GM10248 (cell line): ENCODE measurements at regions of chr15 and their contacts with region 1.

Region 1: DNA sequence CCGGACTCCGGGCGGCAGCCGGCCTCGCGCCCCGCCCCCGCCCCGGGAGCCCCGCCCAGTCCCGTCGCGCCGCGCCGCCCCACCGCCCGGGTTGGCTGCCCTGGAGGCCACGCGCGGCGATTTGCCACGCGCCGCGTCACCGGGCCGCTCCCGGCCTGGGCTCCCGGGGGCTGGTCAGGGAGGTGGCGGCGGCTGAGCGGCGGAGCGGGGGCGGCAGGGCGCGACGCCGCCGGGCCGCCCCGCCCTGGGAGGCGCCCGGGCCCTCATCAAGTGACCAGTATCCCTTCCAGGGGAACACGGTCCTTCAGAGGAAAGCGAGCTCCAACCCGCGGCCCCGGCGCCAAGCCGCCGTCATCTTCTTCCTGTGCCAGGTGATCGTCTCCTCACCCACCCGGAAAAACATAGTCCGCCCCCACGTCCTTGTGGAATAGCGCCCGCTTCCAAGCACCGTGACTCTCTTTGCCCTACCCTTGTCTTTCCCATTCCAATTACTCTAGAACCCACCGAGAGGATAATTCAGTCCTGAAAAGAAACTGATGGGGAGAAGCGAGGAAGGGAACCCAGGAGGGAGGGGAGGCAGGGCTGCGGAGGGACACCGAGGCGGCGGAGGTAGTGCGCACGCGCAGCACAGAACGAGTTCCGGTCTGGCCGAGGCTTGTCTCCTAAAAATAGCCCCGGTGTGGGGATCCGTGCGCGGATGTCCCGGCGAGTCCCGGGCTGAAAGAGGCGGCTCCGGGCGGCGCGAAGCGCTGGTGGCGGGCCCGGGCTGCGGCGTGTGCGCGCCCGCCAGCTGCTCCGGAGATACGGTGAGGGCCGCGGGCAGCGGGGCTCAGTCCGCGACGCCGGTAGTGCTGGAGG is at the start of gene MEF2A:
- DNase-seq: peak; percentile 92
- CTCF ChIP-seq: no peak

Region 2: GRCh38 chr15:99104788-99105513 is 460.6 kb before region 1 on chr15 and contains the start of gene SYNM:
- CTCF ChIA-PET with region 1: no interaction called
- POLR2A ChIA-PET with region 1: no interaction called
- DNase-seq: peak; percentile 90
- CTCF ChIP-seq: peak; percentile 78

Region 3: DNA sequence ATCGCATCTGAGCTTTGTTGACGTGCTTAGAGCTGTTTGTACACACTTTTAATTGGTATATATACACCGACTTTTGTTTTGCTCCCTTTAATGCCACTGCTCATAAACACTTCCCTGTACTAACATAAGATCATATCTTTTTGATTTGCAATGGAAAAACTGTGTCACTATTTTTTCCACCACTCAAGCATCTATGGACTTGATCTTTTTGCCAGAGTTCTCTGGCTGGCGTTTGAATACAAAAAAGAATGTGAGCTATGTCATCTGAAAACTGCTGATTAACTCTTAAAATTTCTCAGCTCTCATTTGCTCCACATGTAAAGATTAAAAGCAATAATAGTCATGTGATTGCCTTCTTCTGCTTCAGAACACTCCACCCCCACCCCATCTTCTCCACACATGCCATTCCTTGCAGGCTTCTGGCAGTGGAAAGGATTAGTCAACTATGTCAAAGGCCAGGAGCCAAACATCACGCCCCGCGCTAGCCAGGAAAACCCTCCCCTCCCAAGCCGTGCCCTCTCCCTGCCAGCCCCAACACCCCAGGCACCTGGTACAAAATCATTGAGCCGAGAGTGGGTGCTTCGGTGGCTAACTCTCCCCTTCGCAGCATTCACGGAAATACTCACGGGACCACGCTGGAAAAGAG is 123.2 kb before region 1 on chr15:
- CTCF ChIA-PET with region 1: no interaction called
- POLR2A ChIA-PET with region 1: no interaction called
- DNase-seq: no peak
- CTCF ChIP-seq: no peak

Region 4: DNA sequence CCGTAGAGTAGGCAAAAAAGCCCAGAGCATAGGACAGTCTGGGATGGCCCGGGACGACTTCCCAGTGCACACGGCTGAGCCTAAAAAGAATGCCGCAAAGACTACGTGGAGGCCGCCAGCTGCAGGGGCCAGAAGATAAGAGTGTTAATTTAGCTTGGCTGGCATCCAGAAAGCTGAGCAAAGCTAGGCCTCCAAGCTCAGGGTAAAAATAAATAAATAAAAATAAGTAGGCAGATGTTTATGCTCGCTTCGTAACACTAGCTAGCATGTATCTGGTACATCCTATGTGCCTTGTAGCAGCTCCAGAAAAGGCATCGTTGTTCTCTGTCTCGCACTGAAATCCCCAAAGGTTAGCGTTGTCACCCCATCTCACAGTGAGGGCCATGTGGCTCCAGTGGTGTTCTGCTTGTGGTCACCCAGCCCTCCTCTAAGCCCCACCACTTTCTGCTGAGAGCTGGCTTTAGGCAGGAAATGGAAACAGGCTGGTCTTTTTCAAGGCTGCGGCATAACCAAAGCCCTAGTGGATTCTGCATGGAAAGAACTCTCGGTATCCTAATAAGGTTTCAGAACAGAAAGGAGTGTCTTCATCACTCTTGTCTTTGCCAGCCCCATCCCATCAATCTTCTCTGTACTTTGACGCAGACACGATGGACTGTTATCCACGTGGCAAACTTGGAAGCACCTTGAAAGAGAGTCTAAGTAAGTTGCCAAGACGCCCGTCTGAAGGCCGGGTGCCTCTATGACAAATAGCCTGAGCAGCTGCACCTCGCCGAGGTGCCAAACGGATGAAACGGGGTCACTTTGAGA is 57.8 kb before region 1 on chr15:
- CTCF ChIA-PET with region 1: interaction called, 7 read pairs
- POLR2A ChIA-PET with region 1: interaction called, 21 read pairs
- DNase-seq: peak; percentile 40
- CTCF ChIP-seq: no peak

Region 5: DNA sequence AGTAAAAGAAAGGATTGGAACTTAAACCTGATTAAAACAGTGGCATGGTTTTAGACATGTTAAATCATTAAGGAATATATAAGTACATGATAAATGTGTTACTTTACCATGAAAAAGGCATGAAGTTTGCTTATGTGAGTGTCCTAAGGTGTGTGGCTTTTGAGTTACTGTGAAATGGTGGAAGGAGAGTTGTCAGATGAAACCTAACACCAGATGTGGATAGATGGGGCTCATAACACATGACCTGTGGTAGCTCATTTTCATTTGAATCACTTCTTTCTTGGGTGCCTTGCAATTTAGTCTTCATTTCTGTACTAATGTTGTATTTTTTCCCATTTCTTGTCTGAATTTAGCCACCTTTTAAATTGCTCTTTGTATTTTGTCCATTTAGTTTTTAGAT is 13.3 kb after region 1 on chr15:
- CTCF ChIA-PET with region 1: interaction called, 14 read pairs
- POLR2A ChIA-PET with region 1: interaction called, 4 read pairs
- DNase-seq: no peak
- CTCF ChIP-seq: no peak

Region 6: DNA sequence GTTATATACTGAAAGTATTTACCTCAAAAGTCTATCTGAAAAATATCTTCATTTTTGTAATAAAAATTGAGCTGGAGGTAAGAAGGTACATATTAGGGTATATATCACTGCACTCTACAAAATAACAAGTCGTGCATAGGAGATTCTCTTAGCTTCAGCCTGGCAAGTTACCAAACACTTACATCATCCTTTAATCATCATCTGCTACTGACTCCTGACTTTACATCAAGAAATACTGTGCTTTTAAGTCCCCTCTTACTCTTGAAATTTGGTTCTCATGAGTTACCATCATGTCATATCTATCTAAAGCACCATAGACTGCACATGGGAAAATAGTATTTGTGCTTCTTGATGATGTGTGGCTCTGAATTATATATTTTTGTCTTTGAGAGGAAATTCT is 116.9 kb after region 1 on chr15:
- CTCF ChIA-PET with region 1: no interaction called
- POLR2A ChIA-PET with region 1: no interaction called
- DNase-seq: no peak
- CTCF ChIP-seq: no peak